ENCODE measurements at regions of chr13 and their contacts with region 1.

Region 1: GRCh38 chr13:95834134-95834765 is 157.3 kb downstream of the DNAJC3 start:
- DNase-seq: peak; percentile 52
- H3K4me3 ChIP-seq: no peak overlapping the region
- H3K27ac ChIP-seq: no peak overlapping the region
- H3K4me1 ChIP-seq: peaks cover 10% of the 10 kb centered on the region
- H3K27me3 ChIP-seq: no peaks in the 10 kb centered on the region
- CTCF ChIP-seq: peak; percentile 89 to 97

Region 2: GRCh38 chr13:95191821-95192563 is 642.3 kb before region 1 on chr13:
- CTCF ChIA-PET with region 1: no interaction called
- dilution Hi-C with region 1: no loop called
- in situ Hi-C with region 1: loop called in 1 of 2 experiments (anchors 25 kb)
- intact Hi-C with region 1: loop called (anchors 2 kb)
- DNase-seq: peak; percentile 31
- H3K4me3 ChIP-seq: no peak overlapping the region
- H3K27ac ChIP-seq: no peak overlapping the region
- H3K4me1 ChIP-seq: no peaks in the 10 kb centered on the region
- H3K27me3 ChIP-seq: no peaks in the 10 kb centered on the region
- CTCF ChIP-seq: peak; percentile 82 to 91

Region 3: DNA sequence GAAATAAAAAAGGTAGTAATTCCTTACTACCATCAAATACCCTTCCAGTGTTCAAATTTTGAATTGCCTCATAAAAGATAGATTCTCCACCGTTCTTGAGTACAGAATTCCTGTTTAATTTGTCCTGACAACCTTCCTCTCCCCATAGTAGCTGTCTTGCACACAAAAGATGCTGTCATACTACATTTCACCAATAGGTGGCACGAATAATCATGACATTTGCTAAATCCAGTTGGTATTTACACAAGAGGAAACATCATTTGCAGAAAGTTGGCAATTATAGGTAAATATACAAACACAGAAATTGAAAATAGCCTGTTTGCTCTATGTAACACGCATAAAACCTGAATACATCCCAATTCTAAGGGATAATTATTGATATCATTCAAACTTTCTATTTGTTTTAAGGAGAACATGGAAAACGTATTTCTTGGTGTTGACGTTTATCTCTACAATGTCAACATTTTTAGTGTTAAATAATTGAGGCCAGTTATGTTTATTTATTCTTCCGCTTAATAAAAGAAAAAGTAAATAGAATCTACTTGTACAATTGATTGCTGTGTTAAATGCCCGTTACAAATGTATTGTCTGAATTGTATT is 340.1 kb before region 1 on chr13:
- CTCF ChIA-PET with region 1: no interaction called
- dilution Hi-C with region 1: no loop called
- in situ Hi-C with region 1: no loop called
- intact Hi-C with region 1: loop called (anchors 1 kb)
- DNase-seq: peak; percentile 65
- H3K4me3 ChIP-seq: no peak overlapping the region
- H3K27ac ChIP-seq: no peak overlapping the region
- H3K4me1 ChIP-seq: peaks cover 3% of the 10 kb centered on the region
- H3K27me3 ChIP-seq: no peaks in the 10 kb centered on the region
- CTCF ChIP-seq: peak; percentile 75 to 77

Region 4: DNA sequence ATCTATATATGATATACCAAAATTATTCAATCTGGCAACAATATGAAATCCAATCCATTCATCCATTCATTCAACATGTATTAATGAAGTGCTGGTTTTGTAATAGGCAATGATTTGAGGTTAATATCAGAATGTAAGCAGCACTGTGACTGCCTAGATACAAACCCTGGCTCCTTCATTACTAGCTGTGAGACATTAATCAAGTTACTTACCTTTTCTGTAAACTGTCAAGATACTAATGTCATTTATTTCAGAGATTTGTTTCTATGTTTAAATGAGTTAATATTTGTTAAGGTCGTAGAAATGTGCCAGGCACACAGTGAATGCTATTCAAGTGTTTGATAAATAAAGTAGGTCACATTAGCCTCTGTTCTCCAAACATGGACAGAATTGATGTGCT is 240.8 kb before region 1 on chr13:
- CTCF ChIA-PET with region 1: no interaction called
- dilution Hi-C with region 1: loop called (anchors 5 kb)
- in situ Hi-C with region 1: no loop called
- intact Hi-C with region 1: no loop called
- DNase-seq: no peak
- H3K4me3 ChIP-seq: no peak overlapping the region
- H3K27ac ChIP-seq: no peak overlapping the region
- H3K4me1 ChIP-seq: peaks cover 3% of the 10 kb centered on the region
- H3K27me3 ChIP-seq: no peaks in the 10 kb centered on the region
- CTCF ChIP-seq: no peak

Region 5: DNA sequence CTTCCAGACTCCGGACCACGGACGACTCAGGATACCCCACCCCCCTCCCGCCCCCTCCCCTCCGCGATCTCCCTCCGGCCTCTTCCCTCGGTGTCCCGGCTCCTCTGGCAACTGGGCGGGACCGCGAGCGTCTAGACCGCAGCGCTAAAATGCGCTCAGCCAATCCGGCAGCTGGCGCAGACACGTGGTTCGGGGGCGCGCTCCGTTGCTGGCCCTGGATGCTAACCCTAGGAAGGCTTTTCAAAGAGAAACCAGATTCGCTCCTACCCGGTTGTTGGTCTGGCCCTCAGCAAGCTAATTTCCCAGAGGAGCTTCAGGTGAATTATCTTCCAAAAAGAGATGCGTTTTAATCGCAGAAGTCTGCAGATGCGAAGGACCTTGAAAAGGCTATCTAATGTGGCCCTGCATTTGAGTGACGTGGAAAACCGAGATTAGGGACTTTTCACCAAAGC is 189.6 kb before region 1 on chr13 and contains the start of gene DZIP1:
- CTCF ChIA-PET with region 1: interaction called, 7 read pairs
- dilution Hi-C with region 1: no loop called
- in situ Hi-C with region 1: no loop called
- intact Hi-C with region 1: loop called (anchors 1 kb)
- DNase-seq: peak; percentile 77
- H3K4me3 ChIP-seq: peak within 1 kb of the TSS; percentile 63 to 71 (median 70)
- H3K27ac ChIP-seq: peak within 1 kb of the TSS; percentile 36
- H3K4me1 ChIP-seq: peaks cover 23% of the 10 kb centered on the region
- H3K27me3 ChIP-seq: no peaks in the 10 kb centered on the region
- CTCF ChIP-seq: no peak
- total RNA-seq, gene DZIP1: 28.3 to 29.3 TPM

Region 6: GRCh38 chr13:95676762-95677563 is 157.3 kb before region 1 on chr13 and contains the start of gene DNAJC3:
- CTCF ChIA-PET with region 1: interaction called, 3 read pairs
- dilution Hi-C with region 1: no loop called
- in situ Hi-C with region 1: no loop called
- intact Hi-C with region 1: loop called (anchors 5 kb)
- DNase-seq: peak; percentile 98
- H3K4me3 ChIP-seq: peak within 1 kb of the TSS; percentile 90 to 97 (median 96)
- H3K27ac ChIP-seq: peak within 1 kb of the TSS; percentile 73
- H3K4me1 ChIP-seq: peaks cover 17% of the 10 kb centered on the region
- H3K27me3 ChIP-seq: no peaks in the 10 kb centered on the region
- CTCF ChIP-seq: no peak
- total RNA-seq, gene DNAJC3: 46.1 to 50.0 TPM